ENCODE measurements at regions of chr17 and their contacts with region 1.

Region 1: DNA sequence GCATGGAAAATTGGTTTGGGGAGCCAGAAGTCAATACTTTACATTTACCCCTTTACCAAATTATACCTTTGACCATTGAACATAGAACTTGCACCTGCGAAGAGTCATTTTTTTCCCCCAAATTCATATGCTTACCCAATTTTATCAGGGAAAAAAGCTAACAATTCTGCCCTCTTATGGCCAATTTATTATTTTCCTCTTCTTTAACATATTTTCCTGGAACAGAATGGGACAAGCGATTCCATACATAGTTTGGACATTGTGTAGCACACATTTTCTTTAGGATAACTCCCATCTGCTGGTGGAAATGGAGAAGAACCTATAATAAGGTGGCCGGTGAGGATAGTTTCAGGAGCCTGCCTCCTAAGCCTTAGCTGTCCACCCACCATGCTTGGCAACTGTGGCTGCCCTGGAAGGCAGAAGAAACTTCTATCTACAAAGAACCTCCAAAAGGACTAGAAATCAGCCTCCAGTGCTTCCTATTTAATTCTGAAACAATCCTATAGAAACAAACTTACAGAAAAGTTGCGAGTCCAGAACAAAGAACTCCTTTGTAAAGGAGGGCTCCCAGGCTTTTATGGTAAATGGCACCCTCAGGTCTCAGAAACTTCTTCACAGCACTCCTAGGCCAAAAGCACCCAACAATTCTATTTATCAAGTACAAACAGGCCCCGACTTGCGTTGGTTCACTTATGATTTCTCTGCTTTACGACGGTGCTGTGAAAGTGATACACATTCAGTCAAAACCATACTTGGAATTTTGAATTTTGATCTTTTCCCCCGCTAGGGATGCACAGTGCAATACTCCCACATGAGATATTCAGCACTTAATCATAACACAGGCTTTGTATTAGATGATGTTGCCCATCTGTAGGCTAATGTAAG is 64.1 kb upstream of the CACNG4 start:
- DNase-seq: no peak
- H3K4me3 ChIP-seq: no peak overlapping the region
- H3K27ac ChIP-seq: peak overlapping the region; percentile 3
- H3K4me1 ChIP-seq: peaks cover 25% of the 10 kb centered on the region
- H3K27me3 ChIP-seq: no peaks in the 10 kb centered on the region
- CTCF ChIP-seq: peak; percentile 30 to 33

Region 2: DNA sequence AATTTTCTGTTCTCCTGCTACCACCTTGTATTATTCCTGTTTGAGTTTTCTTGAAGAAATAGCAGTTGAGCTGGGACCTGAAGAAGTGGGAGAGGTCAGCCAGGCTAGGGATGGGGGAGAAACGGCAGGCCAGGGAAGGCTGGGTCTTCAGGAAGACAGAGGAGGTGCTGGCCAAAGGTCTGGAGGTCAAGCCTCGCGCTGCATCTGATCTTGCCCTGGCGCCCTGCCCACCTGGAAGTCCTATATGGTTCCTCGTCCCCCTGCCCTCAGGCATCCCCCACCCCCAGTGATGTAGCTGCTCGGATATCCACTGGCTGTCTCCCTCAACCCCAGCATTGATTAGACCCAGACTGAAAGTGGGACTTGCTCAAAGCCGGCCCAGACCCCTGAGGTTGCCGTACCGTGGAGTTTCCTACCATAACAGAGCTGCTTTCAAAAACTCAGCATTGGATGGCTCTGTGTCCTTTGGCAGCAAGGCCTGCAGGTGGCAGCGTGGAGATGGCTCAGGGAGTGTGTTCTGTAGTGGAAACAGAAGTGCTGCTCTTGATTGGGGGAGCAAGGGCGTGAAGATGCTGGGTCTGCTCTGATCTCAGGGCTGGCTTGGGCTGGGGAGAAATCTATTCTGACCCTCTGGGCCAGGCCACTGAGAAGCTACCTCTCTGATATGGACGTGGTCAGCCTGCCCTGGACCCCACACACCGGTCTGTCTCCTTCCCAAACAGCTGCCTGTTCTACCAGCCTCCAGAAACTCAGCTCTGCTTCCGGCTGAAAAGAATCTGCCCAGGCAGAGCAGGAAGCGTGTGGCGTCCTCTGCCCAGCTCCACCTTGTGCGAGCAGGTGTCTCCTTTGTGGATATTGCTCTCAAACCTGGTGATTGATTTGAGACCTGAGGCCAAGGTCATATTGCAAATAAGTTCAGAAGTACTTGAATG is 172.5 kb before region 1 on chr17:
- CTCF ChIA-PET with region 1: interaction called, 6 read pairs
- dilution Hi-C with region 1: no loop called
- in situ Hi-C with region 1: no loop called
- intact Hi-C with region 1: loop called (anchors 1 kb)
- DNase-seq: peak; percentile 29
- H3K4me3 ChIP-seq: no peak overlapping the region
- H3K27ac ChIP-seq: no peak overlapping the region
- H3K4me1 ChIP-seq: no peaks in the 10 kb centered on the region
- H3K27me3 ChIP-seq: no peaks in the 10 kb centered on the region
- CTCF ChIP-seq: peak; percentile 64 to 83

Region 3: GRCh38 chr17:66915204-66916096 is 15.1 kb after region 1 on chr17:
- CTCF ChIA-PET with region 1: no interaction called
- dilution Hi-C with region 1: no loop called
- in situ Hi-C with region 1: no loop called
- intact Hi-C with region 1: no loop called
- DNase-seq: peak; percentile 64
- H3K4me3 ChIP-seq: no peak overlapping the region
- H3K27ac ChIP-seq: no peak overlapping the region
- H3K4me1 ChIP-seq: peaks cover 6% of the 10 kb centered on the region
- H3K27me3 ChIP-seq: no peaks in the 10 kb centered on the region
- CTCF ChIP-seq: peak; percentile 74 to 86

Region 4: GRCh38 chr17:67121316-67121887 is 221.0 kb after region 1 on chr17:
- CTCF ChIA-PET with region 1: no interaction called
- dilution Hi-C with region 1: no loop called
- in situ Hi-C with region 1: no loop called
- intact Hi-C with region 1: no loop called
- DNase-seq: no peak
- H3K4me3 ChIP-seq: no peak overlapping the region
- H3K27ac ChIP-seq: no peak overlapping the region
- H3K4me1 ChIP-seq: no peaks in the 10 kb centered on the region
- H3K27me3 ChIP-seq: no peaks in the 10 kb centered on the region
- CTCF ChIP-seq: no peak